PC-3 (cell line): ENCODE measurements at regions of chr1 and their contacts with region 1.

Region 1: GRCh38 chr1:156767101-156767878 is at the start of gene PRCC:
- DNase-seq: peak; percentile 100
- ATAC-seq: peak; percentile 93
- H3K4me3 ChIP-seq: peak within 1 kb of the TSS; percentile 74
- H3K27ac ChIP-seq: peak within 1 kb of the TSS; percentile 74
- H3K4me1 ChIP-seq: peaks cover 31% of the 10 kb centered on the region
- H3K27me3 ChIP-seq: no peaks in the 10 kb centered on the region
- CTCF ChIP-seq: no peak
- total RNA-seq, gene PRCC: 103 TPM in 2 replicates

Region 2: DNA sequence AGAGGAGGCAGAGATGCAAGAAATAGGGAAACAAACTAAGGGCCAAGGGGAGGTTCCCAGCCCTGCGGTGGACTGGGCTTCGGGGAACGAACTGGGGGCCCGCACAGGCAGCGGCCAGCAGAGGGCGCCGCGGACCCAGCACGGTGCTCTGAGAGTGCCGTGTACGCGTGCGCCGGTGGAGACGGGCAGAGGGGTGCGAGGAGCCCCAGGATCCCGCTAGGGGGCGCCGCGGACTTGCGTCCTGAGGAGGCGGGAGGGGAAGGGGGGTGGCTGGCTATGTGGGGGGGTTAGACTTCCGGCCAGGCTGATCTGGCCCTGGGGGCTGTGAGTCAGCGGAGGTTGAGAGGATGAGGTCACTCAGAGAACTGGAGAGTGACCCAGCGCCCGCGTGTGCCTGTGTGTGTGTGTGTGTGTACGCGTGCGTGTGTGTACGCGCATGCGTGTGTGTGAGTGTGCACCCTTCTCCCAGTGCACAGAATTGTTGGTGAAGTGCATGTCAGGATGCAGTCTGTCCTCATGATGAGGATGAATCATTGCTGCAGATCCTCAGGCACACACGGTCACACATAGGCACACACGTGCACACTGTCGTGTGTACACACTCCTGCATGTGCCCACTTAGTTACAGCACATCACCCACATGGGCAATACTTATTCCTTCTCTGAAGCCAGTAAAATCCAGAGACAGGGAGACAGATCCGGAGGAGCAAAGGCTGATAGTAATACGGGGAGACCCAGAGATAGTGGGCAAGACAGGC is 107.1 kb before region 1 on chr1:
- CTCF ChIA-PET with region 1: no interaction called
- POLR2A ChIA-PET with region 1: no interaction called
- intact Hi-C with region 1: no loop called
- DNase-seq: peak; percentile 99
- ATAC-seq: peak; percentile 70
- H3K4me3 ChIP-seq: peak overlapping the region; percentile 64
- H3K27ac ChIP-seq: peak overlapping the region; percentile 66
- H3K4me1 ChIP-seq: peaks cover 52% of the 10 kb centered on the region
- H3K27me3 ChIP-seq: 0 out of 2 replicates have a peak, but pooled peaks cover 3% of the 10 kb centered on the region
- CTCF ChIP-seq: peak; percentile 100

Region 3: GRCh38 chr1:156740679-156741612 is 26.3 kb before region 1 on chr1 and contains the start of gene MRPL24:
- CTCF ChIA-PET with region 1: interaction called, 9 read pairs
- POLR2A ChIA-PET with region 1: interaction called, 18 read pairs
- intact Hi-C with region 1: loop called (anchors 1 kb)
- DNase-seq: peak; percentile 99
- ATAC-seq: peak; percentile 89
- H3K4me3 ChIP-seq: peak within 1 kb of the TSS; percentile 78
- H3K27ac ChIP-seq: peak within 1 kb of the TSS; percentile 61
- H3K4me1 ChIP-seq: peaks cover 22% of the 10 kb centered on the region
- H3K27me3 ChIP-seq: no peaks in the 10 kb centered on the region
- CTCF ChIP-seq: no peak
- total RNA-seq, gene MRPL24: 232 and 275 TPM in 2 replicates